Gastrocnemius medialis (tissue), 4 donors: ENCODE measurements at regions of chr9 and their contacts with region 1.

Region 1: GRCh38 chr9:77569173-77569734 is 78.9 kb downstream of the GNA14 start:
- DNase-seq: no peak
- ATAC-seq: no peak
- H3K4me3 ChIP-seq: no peak overlapping the region
- H3K27ac ChIP-seq: no peak overlapping the region
- H3K4me1 ChIP-seq: no peaks in the 10 kb centered on the region
- H3K27me3 ChIP-seq: no peaks in the 10 kb centered on the region
- CTCF ChIP-seq: no peak
- POLR2A ChIP-seq: no peak

Region 2: DNA sequence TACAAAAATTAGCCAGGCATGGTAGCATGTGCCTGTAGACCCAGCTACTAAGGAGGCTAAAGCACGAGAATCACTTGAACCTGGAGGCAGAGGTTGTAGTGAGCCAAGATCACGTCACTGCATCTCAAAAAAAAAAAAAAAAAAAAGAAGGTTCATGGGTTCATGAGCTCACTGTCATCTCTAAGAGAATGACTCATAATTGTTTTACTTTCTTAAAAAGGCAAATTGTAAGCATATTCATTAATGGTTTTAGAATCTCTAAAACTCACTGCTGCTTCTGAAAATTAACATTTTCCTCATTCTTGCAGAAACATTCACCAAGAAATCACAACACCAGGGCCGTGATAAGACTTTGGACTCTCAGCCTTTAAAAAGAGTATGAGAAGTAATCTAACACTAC is 24.7 kb before region 1 on chr9:
- in situ Hi-C with region 1: no loop called
- intact Hi-C with region 1: no loop called
- DNase-seq: no peak
- ATAC-seq: no peak
- H3K4me3 ChIP-seq: no peak overlapping the region
- H3K27ac ChIP-seq: no peak overlapping the region
- H3K4me1 ChIP-seq: no peaks in the 10 kb centered on the region
- H3K27me3 ChIP-seq: no peaks in the 10 kb centered on the region
- CTCF ChIP-seq: no peak
- POLR2A ChIP-seq: no peak

Region 3: DNA sequence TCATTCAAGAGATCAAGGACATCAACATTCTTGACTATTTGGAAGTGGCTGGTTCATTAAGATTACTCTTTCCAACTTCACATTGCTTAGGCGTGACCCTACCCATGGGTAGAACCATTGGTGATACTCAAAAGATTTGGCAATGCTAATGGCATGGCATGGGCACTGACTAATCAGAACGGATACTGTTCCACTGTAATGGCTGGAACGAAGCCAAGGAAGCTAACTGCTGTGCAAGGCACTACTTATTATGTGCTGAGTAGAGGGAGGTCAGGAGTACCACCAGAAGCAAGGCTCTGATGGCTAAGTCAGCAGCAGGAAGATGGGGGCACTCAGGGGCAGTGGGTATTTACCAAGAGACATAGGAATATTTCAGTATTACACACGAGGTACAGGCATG is 46.9 kb after region 1 on chr9:
- in situ Hi-C with region 1: loop called in 1 of 4 experiments (anchors 10 kb)
- intact Hi-C with region 1: no loop called
- DNase-seq: no peak
- ATAC-seq: no peak
- H3K4me3 ChIP-seq: no peak overlapping the region
- H3K27ac ChIP-seq: no peak overlapping the region
- H3K4me1 ChIP-seq: no peaks in the 10 kb centered on the region
- H3K27me3 ChIP-seq: no peaks in the 10 kb centered on the region
- CTCF ChIP-seq: no peak
- POLR2A ChIP-seq: no peak